ENCODE measurements at regions of chr2 and their contacts with region 1.

Region 1: GRCh38 chr2:46917628-46918027 is 2.0 kb upstream of the MCFD2 start:
- DNase-seq: no peak
- ATAC-seq: no peak
- H3K4me3 Mint-ChIP-seq: peak overlapping the region; percentile 90
- H3K27ac Mint-ChIP-seq: no peak overlapping the region
- H3K4me1 Mint-ChIP-seq: peaks cover 25% of the 10 kb centered on the region
- H3K27me3 Mint-ChIP-seq: no peaks in the 10 kb centered on the region
- CTCF ChIP-seq: no peak

Region 2: GRCh38 chr2:46929612-46930011 is 12.0 kb after region 1 on chr2:
- CTCF ChIA-PET with region 1: interaction called, 12 read pairs
- POLR2A ChIA-PET with region 1: no interaction called
- DNase-seq: no peak
- ATAC-seq: no peak
- H3K4me3 Mint-ChIP-seq: no peak overlapping the region
- H3K27ac Mint-ChIP-seq: no peak overlapping the region
- H3K4me1 Mint-ChIP-seq: peaks cover 8% of the 10 kb centered on the region
- H3K27me3 Mint-ChIP-seq: peaks cover 5% of the 10 kb centered on the region; the same call in 1 of the 2 replicates
- CTCF ChIP-seq: no peak

Region 3: GRCh38 chr2:46937471-46937901 is 19.9 kb after region 1 on chr2:
- CTCF ChIA-PET with region 1: interaction called, 21 read pairs
- POLR2A ChIA-PET with region 1: interaction called, 3 read pairs
- DNase-seq: no peak
- ATAC-seq: no peak
- H3K4me3 Mint-ChIP-seq: no peak overlapping the region
- H3K27ac Mint-ChIP-seq: no peak overlapping the region
- H3K4me1 Mint-ChIP-seq: peaks cover 20% of the 10 kb centered on the region
- H3K27me3 Mint-ChIP-seq: peaks cover 19% of the 10 kb centered on the region
- CTCF ChIP-seq: no peak